ENCODE measurements at regions of chr15 and their contacts with region 1.

Region 1: DNA sequence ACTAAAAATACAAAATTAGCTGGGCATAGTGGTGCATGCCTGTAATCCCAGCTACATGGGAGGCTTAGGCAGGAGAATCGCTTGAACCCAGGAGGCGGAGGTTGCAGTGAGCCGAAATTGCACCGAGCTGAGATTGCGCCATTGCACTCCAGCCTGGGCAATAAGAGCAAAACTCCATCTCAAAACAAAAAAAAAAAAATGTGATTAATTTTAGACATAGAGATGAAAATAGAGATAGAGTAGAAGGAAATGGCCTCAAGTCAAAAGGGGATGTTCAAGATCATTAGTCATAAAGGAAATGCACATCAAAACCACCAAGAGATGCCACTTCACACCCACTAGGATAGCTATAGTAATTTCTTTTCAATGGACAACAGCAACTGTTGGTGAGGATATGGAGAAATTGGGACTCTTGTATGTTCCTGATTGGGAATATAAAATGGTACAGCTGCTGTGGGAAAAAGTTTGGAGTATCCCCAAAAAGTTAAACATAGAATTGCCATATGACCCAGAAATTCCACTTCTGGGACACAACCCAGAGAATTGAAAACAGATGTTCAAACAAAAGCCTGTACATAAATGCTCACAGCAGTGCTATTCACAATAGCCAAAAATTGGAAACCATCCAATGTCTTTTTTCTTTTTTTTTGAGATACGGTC is 55.4 kb downstream of the ABHD2 start:
- DNase-seq: peak; percentile 21 to 75
- H3K4me3 ChIP-seq: no peak overlapping the region
- H3K27ac ChIP-seq: peak overlapping the region; percentile 21
- H3K4me1 ChIP-seq: peaks cover 23% of the 10 kb centered on the region
- H3K27me3 ChIP-seq: no peaks in the 10 kb centered on the region
- CTCF ChIP-seq: no peak

Region 2: DNA sequence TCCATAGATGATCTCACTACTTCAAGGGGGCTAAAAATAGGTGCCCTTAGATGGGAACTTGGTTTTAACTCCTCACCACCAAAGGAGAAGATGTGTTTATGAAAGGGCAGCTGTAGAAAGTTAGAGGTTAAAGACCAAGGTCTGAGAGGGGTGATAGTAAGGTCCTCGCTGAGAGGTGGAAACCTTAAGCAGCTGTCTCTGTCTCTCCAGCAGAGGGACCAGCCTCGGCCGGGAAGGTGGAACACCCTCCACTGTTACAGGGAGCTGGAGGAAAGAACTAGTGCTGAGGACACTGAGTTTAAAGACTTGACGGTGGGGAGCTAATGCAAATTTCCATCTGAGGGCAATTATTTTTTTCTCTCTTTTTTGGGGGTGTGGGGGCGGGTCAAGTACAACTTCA is 86.6 kb after region 1 on chr15:
- CTCF ChIA-PET with region 1: no interaction called
- POLR2A ChIA-PET with region 1: interaction called, 12 read pairs
- intact Hi-C with region 1: no loop called
- DNase-seq: no peak
- H3K4me3 ChIP-seq: no peak overlapping the region
- H3K27ac ChIP-seq: no peak overlapping the region
- H3K4me1 ChIP-seq: no peaks in the 10 kb centered on the region
- H3K27me3 ChIP-seq: 0 out of 2 replicates have a peak, but pooled peaks cover 5% of the 10 kb centered on the region
- CTCF ChIP-seq: no peak

Region 3: DNA sequence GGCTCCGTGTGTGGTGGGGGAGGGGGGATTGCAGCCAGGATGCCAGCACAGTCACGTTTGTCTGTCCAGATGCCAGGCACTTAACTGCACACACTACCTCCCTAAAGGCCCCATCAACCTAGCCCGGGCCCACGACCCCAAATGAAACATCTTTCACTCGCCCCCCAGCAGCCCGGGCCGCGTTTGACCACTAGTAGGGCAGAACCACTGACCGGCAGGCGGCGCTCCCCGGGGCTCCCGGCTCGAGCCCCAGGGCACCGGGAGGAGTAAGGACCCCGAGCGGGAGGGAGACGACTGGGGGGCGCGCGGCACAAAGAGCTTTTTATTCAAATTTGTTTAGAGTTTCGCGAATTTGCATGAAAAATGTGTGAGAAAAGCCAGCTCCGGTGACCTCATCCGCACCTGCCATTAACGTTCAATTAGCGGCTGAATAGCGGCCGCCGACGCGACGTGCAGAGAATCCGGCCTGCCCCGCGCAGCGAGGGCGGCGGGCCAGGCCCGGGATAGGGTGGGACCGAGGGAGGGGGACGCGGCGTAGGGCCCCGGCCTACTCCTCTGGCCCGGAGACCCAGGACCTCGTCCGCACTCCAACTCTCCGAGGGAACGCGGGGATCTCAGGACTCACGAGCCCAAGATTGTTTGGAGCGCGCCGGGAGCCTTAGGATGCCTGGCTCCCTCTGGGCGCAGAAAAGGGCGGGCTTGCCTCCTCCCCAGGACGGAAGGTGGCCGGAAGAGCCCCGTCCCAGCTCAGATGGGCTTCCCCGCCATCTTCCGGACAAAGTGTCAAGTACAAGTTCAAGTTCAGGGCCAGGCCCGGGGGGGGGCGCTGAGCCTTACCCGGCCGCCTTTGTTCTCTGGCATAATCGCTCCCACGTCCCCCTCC is 255.8 kb after region 1 on chr15:
- CTCF ChIA-PET with region 1: interaction called, 13 read pairs
- POLR2A ChIA-PET with region 1: no interaction called
- intact Hi-C with region 1: no loop called
- DNase-seq: peak in 1 of 2 experiments; percentile 42
- H3K4me3 ChIP-seq: peak overlapping the region; percentile 50; the same call in 1 of the 2 replicates
- H3K27ac ChIP-seq: no peak overlapping the region
- H3K4me1 ChIP-seq: peaks cover 15% of the 10 kb centered on the region; the same call in 1 of the 2 replicates
- H3K27me3 ChIP-seq: no peaks in the 10 kb centered on the region
- CTCF ChIP-seq: 0 out of 2 replicates have a peak, but pooled peaks have one; percentile 26